Right ventricle myocardium inferior (tissue), 1 donor: ENCODE measurements at regions of chr4 and their contacts with region 1.

Region 1: DNA sequence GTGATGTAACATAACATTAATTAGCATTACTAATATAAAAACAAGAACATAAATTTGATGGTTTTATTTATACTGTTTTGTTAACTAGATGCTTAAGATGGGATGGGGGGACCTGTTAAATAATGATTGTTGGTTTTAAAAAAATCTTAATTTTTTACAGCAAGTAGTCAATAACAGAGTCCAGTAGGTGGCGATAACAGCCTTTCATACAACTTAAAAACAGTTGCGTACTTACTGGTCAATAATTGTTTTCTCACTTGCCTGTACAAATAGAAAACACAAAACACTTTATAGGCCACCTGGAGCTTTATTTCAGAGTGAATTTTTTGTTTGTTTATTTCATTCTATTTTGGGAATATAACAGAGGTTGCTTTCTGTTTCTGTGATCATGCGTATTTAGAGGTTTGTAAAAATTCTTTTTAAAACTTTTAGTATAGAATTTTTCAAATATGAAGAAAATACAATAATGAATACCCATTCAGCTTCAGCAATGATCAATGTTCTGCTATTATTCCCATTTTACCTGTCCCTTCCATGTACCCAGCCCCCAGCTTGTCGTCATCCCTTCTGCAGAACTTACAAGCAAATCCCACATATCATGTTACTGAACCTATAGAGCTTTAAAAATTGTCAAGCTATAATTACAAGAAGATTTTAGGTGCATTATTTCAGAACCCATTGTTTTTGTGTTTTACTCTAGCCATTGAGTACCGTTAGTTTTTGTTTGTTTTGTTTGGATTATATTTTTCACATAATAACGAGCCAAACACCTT is 97.1 kb downstream of the MRPL1 start:
- DNase-seq: no peak
- ATAC-seq: no peak

Region 2: GRCh38 chr4:78517050-78517652 is 557.4 kb after region 1 on chr4:
- intact Hi-C with region 1: loop called (anchors 5 kb)
- DNase-seq: no peak
- ATAC-seq: no peak

Region 3: DNA sequence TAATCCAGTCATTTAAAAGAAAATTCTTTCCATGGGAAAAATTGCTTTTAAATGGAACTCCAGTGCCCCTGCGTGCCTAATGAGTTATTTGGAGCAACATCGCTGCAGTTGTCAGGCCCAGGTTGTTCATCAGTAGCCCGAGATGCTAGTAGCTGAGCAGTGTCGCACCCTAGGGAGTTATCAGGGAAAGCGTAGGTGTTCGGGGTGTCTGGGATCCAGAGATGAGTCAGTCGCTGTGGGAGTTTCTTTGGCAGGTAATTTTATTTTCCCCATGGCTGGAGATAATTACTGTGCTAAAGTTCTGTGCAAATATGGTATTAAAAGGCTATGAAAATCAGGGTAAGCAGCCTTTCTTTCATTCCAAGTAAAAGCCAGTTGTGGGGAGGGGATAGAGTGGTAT is 641.3 kb after region 1 on chr4:
- intact Hi-C with region 1: loop called (anchors 10 kb)
- DNase-seq: no peak
- ATAC-seq: no peak

Region 4: GRCh38 chr4:78864405-78865024 is 904.8 kb after region 1 on chr4:
- intact Hi-C with region 1: loop called (anchors 10 kb)
- DNase-seq: no peak
- ATAC-seq: peak; percentile 57